CD8-positive, alpha-beta T cell (primary cell): ENCODE measurements at regions of chr1 and their contacts with region 1.

Region 1: DNA sequence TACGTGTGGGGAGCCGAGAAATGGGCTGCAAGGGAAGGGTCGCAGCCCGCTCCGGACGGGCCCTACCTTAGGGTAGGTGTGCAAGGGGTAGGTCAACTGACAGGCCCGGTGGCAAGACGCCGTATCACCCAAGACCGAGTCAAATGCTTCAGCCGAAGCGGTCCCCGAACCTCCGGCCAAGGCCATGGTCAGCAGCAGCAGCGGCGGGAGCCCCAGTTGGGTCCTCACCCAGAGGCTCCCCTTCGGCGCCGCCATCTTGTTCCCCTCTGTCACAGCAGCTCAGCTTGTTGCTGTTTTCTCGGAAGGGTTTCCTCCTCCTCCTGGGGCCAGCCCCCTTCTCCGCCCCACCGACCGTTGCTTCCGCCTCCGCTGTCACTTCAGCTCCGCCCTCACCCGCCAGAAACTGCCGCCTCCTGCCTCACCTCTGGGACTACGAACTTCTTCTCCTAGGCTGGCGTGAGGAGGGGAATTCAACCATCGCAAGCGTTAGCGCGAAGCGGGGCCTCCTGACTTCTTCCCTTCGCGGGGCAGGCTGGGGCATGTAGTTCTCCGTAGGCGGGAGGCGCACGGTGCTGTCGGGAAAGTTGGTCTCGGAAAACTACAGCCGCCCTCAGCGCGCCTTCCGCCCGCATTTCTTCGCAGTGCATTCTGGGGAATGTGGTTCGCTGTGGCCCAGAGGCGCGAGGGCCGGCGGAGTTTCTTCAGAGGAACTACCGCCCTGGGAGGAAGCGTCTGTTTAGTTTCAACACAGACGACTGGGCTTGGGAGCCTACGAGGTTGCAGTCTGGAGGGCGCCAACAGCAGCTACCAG is at the starts of genes TCEANC2 and TMEM59:
- DNase-seq: peak; percentile 94 to 100 (median 97)
- ATAC-seq: peak; percentile 89
- H3K4me3 ChIP-seq: peak within 1 kb of the TSS; percentile 87 to 89
- H3K4me3 Mint-ChIP-seq: no peak within 1 kb of the TSS
- H3K27ac ChIP-seq: peak within 1 kb of the TSS; percentile 89 to 93
- H3K27ac Mint-ChIP-seq: no peak within 1 kb of the TSS
- H3K4me1 ChIP-seq: peaks cover 39% of the 10 kb centered on the region
- H3K4me1 Mint-ChIP-seq: peaks cover 51% of the 10 kb centered on the region
- H3K27me3 ChIP-seq: no peaks in the 10 kb centered on the region
- H3K27me3 Mint-ChIP-seq: no peaks in the 10 kb centered on the region
- CTCF ChIP-seq: no peak
- total RNA-seq, gene TCEANC2: 1.8 to 2.1 TPM
- total RNA-seq, gene TMEM59: 125 to 142 TPM

Region 2: GRCh38 chr1:53196485-53197270 is 856.5 kb before region 1 on chr1 and contains the start of gene CPT2:
- CTCF ChIA-PET with region 1: no interaction called
- POLR2A ChIA-PET with region 1: no interaction called
- intact Hi-C with region 1: loop called in 1 of 2 experiments (anchors 10 kb)
- DNase-seq: peak; percentile 75 to 95 (median 92)
- ATAC-seq: peak; percentile 94
- H3K4me3 ChIP-seq: peak within 1 kb of the TSS; percentile 79 to 80
- H3K4me3 Mint-ChIP-seq: peak within 1 kb of the TSS; percentile 97
- H3K27ac ChIP-seq: peak within 1 kb of the TSS; percentile 95 to 96
- H3K27ac Mint-ChIP-seq: peak within 1 kb of the TSS; percentile 96
- H3K4me1 ChIP-seq: peaks cover 22% of the 10 kb centered on the region
- H3K4me1 Mint-ChIP-seq: peaks cover 38% of the 10 kb centered on the region
- H3K27me3 ChIP-seq: no peaks in the 10 kb centered on the region
- H3K27me3 Mint-ChIP-seq: no peaks in the 10 kb centered on the region
- CTCF ChIP-seq: no peak
- total RNA-seq, gene CPT2: 7.8 to 8.2 TPM

Region 3: DNA sequence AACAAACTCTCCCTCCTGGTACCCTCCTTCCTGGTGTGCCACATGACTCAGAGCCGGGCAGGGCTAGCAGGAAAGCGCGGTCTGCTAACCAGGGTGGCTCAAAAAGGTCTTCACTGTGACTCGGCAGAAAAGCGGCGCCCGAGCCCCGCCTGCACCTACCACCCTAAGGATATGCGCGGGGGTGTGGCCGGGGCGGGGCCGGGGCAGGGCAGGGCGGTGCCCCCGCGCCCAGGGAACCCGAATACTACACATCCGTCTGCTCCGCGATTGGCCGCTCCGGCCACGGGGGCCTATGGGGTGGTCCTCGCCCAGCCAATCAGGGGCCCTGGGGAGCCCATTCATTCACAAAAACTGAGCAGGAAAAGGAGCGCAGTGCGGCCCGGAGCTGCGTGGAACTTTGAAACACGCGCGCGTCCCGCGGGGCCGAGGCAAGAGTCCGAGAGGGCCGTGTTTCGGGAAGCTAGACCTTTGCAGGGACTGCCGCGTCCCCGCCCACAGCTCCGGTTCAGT is 727.0 kb before region 1 on chr1:
- CTCF ChIA-PET with region 1: no interaction called
- POLR2A ChIA-PET with region 1: no interaction called
- intact Hi-C with region 1: loop called in 1 of 2 experiments (anchors 5 kb)
- DNase-seq: peak; percentile 78 to 94 (median 92)
- ATAC-seq: peak; percentile 89
- H3K4me3 ChIP-seq: peak overlapping the region; percentile 74 to 82
- H3K4me3 Mint-ChIP-seq: peak overlapping the region; percentile 94
- H3K27ac ChIP-seq: peak overlapping the region; percentile 26 to 66
- H3K27ac Mint-ChIP-seq: peak overlapping the region; percentile 77
- H3K4me1 ChIP-seq: peaks cover 6% of the 10 kb centered on the region
- H3K4me1 Mint-ChIP-seq: peaks cover 16% of the 10 kb centered on the region
- H3K27me3 ChIP-seq: no peaks in the 10 kb centered on the region
- H3K27me3 Mint-ChIP-seq: no peaks in the 10 kb centered on the region
- CTCF ChIP-seq: no peak

Region 4: DNA sequence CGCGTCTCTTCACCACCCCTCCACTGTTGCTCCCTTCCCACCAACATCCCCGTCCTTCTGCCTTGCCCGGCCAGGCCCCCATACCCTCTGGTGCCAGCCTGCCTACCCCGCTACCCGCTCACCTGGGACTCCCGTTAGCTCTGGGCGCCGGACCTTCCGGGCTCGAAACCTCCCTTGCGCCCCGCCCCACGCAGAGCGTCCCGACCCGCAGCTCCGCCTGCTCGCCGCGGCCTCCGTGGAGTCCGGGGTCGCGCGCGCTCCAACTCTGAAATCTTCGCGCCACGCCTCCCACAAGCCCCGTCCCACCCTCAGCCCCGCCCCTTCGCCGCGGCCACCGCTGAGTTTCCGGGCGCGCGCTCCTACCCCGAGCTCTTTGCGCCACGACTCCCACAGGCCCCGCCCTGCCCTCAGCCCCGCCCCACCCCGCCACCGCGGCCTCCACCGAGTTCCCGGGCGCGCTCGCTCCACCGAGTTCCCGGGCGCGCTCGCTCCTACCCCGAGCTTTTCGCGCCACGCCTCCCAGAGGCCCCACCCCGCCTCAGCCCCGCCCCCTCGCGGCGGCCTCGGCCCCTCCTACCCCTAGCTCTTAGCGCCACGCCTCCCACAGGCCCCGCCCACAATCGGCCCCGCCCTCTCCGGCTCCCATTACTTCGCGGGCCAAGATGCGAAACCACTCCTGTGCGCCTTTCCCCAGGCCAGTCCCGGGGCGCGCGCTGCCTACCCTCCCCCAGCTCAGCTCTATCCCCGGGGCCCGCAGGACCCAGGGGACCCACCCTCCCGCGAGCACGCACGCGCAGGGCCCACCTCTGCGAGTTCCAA is 107.5 kb before region 1 on chr1 and contains the start of gene IFT25:
- CTCF ChIA-PET with region 1: interaction called, 3 read pairs
- POLR2A ChIA-PET with region 1: interaction called, 13 read pairs
- intact Hi-C with region 1: loop called (anchors 1 kb)
- DNase-seq: peak; percentile 96 to 100 (median 98)
- ATAC-seq: peak; percentile 81
- H3K4me3 ChIP-seq: peak within 1 kb of the TSS; percentile 81 to 94
- H3K4me3 Mint-ChIP-seq: peak within 1 kb of the TSS; percentile 98
- H3K27ac ChIP-seq: peak within 1 kb of the TSS; percentile 58 to 88
- H3K27ac Mint-ChIP-seq: peak within 1 kb of the TSS; percentile 96
- H3K4me1 ChIP-seq: peaks cover 27% of the 10 kb centered on the region
- H3K4me1 Mint-ChIP-seq: peaks cover 57% of the 10 kb centered on the region
- H3K27me3 ChIP-seq: no peaks in the 10 kb centered on the region
- H3K27me3 Mint-ChIP-seq: no peaks in the 10 kb centered on the region
- CTCF ChIP-seq: no peak
- total RNA-seq, gene IFT25: 12.8 to 13.1 TPM

Region 5: GRCh38 chr1:54715493-54716298 is 662.6 kb after region 1 on chr1 and contains the start of gene TTC4:
- CTCF ChIA-PET with region 1: interaction called, 4 read pairs
- POLR2A ChIA-PET with region 1: no interaction called
- intact Hi-C with region 1: loop called (anchors 1 kb)
- DNase-seq: peak; percentile 68 to 92 (median 82)
- ATAC-seq: peak; percentile 98
- H3K4me3 ChIP-seq: peak within 1 kb of the TSS; percentile 77 to 95
- H3K4me3 Mint-ChIP-seq: peak within 1 kb of the TSS; percentile 86
- H3K27ac ChIP-seq: peak within 1 kb of the TSS; percentile 59 to 60
- H3K27ac Mint-ChIP-seq: peak within 1 kb of the TSS; percentile 85
- H3K4me1 ChIP-seq: peaks cover 18% of the 10 kb centered on the region
- H3K4me1 Mint-ChIP-seq: peaks cover 33% of the 10 kb centered on the region
- H3K27me3 ChIP-seq: no peaks in the 10 kb centered on the region
- H3K27me3 Mint-ChIP-seq: no peaks in the 10 kb centered on the region
- CTCF ChIP-seq: no peak
- total RNA-seq, gene TTC4: 7.8 to 7.9 TPM